MCF 10A (cell line): ENCODE measurements at regions of chr12 and their contacts with region 1.

Region 1: GRCh38 chr12:95918194-95918993 is 24.0 kb downstream of the CCDC38 start:
- DNase-seq: peak; percentile 67
- H3K4me3 Mint-ChIP-seq: no peak overlapping the region
- H3K27ac Mint-ChIP-seq: no peak overlapping the region
- H3K4me1 Mint-ChIP-seq: no peaks in the 10 kb centered on the region
- H3K27me3 Mint-ChIP-seq: no peaks in the 10 kb centered on the region
- CTCF ChIP-seq: peak; percentile 69

Region 2: DNA sequence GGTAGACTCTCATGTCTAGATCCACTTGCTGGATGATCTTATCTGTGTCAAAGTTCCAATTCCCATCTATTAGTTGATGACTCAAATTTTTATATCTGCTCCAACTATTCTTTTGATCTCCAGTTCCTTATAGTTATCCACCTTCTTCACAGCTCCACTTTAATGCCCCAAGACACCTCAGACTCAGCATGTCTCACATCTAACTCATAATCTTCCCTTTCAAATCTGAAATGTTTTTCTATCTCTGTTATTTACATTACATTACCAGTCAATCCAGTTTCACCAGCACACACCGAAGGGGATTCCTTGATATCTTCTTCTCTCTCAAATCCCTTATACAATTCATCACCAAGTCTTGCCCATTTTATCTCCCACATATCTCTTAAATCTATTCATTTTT is 448.1 kb before region 1 on chr12:
- CTCF ChIA-PET with region 1: no interaction called
- POLR2A ChIA-PET with region 1: no interaction called
- intact Hi-C with region 1: no loop called
- DNase-seq: no peak
- H3K4me3 Mint-ChIP-seq: no peak overlapping the region
- H3K27ac Mint-ChIP-seq: no peak overlapping the region
- H3K4me1 Mint-ChIP-seq: no peaks in the 10 kb centered on the region
- H3K27me3 Mint-ChIP-seq: no peaks in the 10 kb centered on the region
- CTCF ChIP-seq: no peak

Region 3: GRCh38 chr12:95763809-95764253 is 154.6 kb before region 1 on chr12:
- CTCF ChIA-PET with region 1: no interaction called
- POLR2A ChIA-PET with region 1: no interaction called
- intact Hi-C with region 1: no loop called
- DNase-seq: peak; percentile 91
- H3K4me3 Mint-ChIP-seq: no peak overlapping the region
- H3K27ac Mint-ChIP-seq: no peak overlapping the region
- H3K4me1 Mint-ChIP-seq: peaks cover 18% of the 10 kb centered on the region
- H3K27me3 Mint-ChIP-seq: no peaks in the 10 kb centered on the region
- CTCF ChIP-seq: no peak

Region 4: GRCh38 chr12:95790033-95790911 is 128.1 kb before region 1 on chr12 and contains the start of gene NTN4:
- CTCF ChIA-PET with region 1: no interaction called
- POLR2A ChIA-PET with region 1: no interaction called
- intact Hi-C with region 1: no loop called
- DNase-seq: peak; percentile 49
- H3K4me3 Mint-ChIP-seq: peak within 1 kb of the TSS; percentile 80
- H3K27ac Mint-ChIP-seq: peak within 1 kb of the TSS; percentile 83
- H3K4me1 Mint-ChIP-seq: no peaks in the 10 kb centered on the region
- H3K27me3 Mint-ChIP-seq: no peaks in the 10 kb centered on the region
- CTCF ChIP-seq: no peak
- total RNA-seq, gene NTN4: 53.0 and 96.4 TPM in 2 replicates

Region 5: DNA sequence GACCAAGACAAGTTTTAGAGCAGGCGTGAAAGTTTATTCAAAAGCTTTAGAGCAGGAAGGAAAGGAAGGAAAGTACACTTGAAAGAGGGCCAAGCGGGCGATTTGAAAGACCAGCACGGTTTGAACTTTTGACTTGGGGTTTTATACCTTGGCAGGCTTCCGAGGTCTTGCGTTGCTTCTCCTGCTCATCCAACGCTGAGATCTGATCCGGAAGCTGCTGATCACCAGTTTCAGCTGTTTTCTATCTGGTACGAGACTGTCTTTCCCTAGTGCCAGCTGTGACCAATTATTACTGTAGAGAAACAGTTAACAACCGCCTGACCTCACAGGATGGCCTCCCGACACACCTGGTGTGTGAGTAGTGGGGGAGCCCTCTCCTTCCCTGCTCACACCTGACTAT is 80.3 kb before region 1 on chr12:
- CTCF ChIA-PET with region 1: no interaction called
- POLR2A ChIA-PET with region 1: no interaction called
- intact Hi-C with region 1: no loop called
- DNase-seq: peak; percentile 80
- H3K4me3 Mint-ChIP-seq: no peak overlapping the region
- H3K27ac Mint-ChIP-seq: no peak overlapping the region
- H3K4me1 Mint-ChIP-seq: peaks cover 16% of the 10 kb centered on the region
- H3K27me3 Mint-ChIP-seq: peaks cover 21% of the 10 kb centered on the region
- CTCF ChIP-seq: no peak

Region 6: GRCh38 chr12:95942524-95943329 is 24.3 kb after region 1 on chr12 and contains the start of gene CCDC38:
- CTCF ChIA-PET with region 1: interaction called, 26 read pairs
- POLR2A ChIA-PET with region 1: interaction called, 4 read pairs
- intact Hi-C with region 1: no loop called
- DNase-seq: peak; percentile 72
- H3K4me3 Mint-ChIP-seq: peak within 1 kb of the TSS; percentile 85
- H3K27ac Mint-ChIP-seq: no peak within 1 kb of the TSS
- H3K4me1 Mint-ChIP-seq: no peaks in the 10 kb centered on the region
- H3K27me3 Mint-ChIP-seq: peaks cover 15% of the 10 kb centered on the region
- CTCF ChIP-seq: no peak
- total RNA-seq, gene CCDC38: 0.12 TPM in 1 of 2 replicates, not detected in the other

Region 7: DNA sequence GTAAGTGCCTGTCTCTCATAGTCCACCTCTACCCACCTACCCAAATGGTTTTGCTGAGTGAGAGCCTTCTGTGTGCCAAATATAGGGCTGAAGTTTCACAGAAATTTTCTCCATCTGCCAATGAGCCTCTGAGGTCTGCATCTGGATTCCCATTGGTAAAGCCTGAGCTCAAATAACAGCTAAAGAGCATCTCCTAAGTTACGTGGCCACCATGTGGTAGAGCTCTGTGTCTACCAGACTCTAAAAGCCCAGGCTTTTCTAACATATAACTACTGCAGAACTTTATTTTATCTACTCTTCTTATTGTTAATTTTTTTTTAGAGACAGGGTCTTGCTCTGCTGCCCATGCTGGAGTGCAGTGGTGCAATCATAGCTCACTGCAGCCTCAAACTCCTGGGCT is 40.7 kb after region 1 on chr12:
- CTCF ChIA-PET with region 1: interaction called, 12 read pairs
- POLR2A ChIA-PET with region 1: interaction called, 3 read pairs
- intact Hi-C with region 1: loop called (anchors 2 kb)
- DNase-seq: peak; percentile 22
- H3K4me3 Mint-ChIP-seq: no peak overlapping the region
- H3K27ac Mint-ChIP-seq: no peak overlapping the region
- H3K4me1 Mint-ChIP-seq: no peaks in the 10 kb centered on the region
- H3K27me3 Mint-ChIP-seq: no peaks in the 10 kb centered on the region
- CTCF ChIP-seq: peak; percentile 11